ENCODE measurements at regions of chr12 and their contacts with region 1.

Region 1: DNA sequence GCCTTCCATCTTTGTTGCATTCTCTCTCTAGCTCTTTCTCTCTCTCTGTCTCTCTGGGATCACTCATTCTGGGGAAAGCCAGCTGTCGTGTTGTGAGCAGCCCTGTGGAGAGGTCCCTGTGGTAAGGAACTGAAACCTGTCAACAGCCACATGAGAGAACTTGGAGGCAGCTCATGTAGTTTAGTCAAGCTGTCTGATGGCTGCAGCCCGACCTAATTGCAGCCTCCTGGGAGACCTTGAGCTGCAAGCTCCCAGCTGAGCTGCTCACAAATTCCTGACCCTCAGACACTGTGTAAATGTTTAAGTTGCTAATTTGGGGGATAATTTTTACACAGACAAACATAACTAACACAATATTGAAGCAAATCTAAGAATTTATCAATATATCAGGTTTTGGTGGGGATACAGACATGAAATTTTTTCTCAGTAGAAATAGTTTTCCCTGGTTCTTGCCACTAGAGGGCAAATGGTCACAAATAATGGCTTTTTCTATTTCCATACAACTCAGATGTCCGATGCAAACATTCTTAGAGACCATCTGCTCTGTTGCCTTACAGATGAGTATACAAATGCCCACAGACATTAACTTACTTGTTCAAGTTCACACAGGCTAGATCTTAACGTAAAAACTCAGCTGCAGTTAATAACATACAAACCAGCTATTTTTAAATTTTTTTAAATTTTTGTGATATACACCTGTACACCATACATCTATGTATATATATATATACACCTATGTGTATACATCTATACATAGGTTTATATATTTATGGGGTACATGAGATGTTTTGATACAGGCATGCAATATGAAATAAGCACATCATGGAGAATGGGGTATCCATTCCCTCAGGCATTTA is 15.5 kb upstream of the KRR1 start:
- DNase-seq: peak; percentile 39
- ATAC-seq: peak; percentile 66
- H3K4me3 Mint-ChIP-seq: no peak overlapping the region
- H3K27ac Mint-ChIP-seq: no peak overlapping the region
- H3K4me1 Mint-ChIP-seq: peaks cover 8% of the 10 kb centered on the region
- H3K27me3 Mint-ChIP-seq: peaks cover 28% of the 10 kb centered on the region
- CTCF ChIP-seq: peak; percentile 61

Region 2: GRCh38 chr12:75623631-75624118 is 96.8 kb after region 1 on chr12:
- CTCF ChIA-PET with region 1: no interaction called
- POLR2A ChIA-PET with region 1: no interaction called
- intact Hi-C with region 1: no loop called
- DNase-seq: no peak
- ATAC-seq: no peak
- H3K4me3 Mint-ChIP-seq: no peak overlapping the region
- H3K27ac Mint-ChIP-seq: no peak overlapping the region
- H3K4me1 Mint-ChIP-seq: no peaks in the 10 kb centered on the region
- H3K27me3 Mint-ChIP-seq: peaks cover 2% of the 10 kb centered on the region
- CTCF ChIP-seq: no peak

Region 3: GRCh38 chr12:75641031-75641780 is 114.3 kb after region 1 on chr12:
- CTCF ChIA-PET with region 1: interaction called, 4 read pairs
- POLR2A ChIA-PET with region 1: no interaction called
- intact Hi-C with region 1: loop called (anchors 10 kb)
- DNase-seq: peak; percentile 73
- ATAC-seq: peak; percentile 93
- H3K4me3 Mint-ChIP-seq: no peak overlapping the region
- H3K27ac Mint-ChIP-seq: peak overlapping the region; percentile 70
- H3K4me1 Mint-ChIP-seq: peaks cover 23% of the 10 kb centered on the region
- H3K27me3 Mint-ChIP-seq: peaks cover 10% of the 10 kb centered on the region
- CTCF ChIP-seq: no peak

Region 4: DNA sequence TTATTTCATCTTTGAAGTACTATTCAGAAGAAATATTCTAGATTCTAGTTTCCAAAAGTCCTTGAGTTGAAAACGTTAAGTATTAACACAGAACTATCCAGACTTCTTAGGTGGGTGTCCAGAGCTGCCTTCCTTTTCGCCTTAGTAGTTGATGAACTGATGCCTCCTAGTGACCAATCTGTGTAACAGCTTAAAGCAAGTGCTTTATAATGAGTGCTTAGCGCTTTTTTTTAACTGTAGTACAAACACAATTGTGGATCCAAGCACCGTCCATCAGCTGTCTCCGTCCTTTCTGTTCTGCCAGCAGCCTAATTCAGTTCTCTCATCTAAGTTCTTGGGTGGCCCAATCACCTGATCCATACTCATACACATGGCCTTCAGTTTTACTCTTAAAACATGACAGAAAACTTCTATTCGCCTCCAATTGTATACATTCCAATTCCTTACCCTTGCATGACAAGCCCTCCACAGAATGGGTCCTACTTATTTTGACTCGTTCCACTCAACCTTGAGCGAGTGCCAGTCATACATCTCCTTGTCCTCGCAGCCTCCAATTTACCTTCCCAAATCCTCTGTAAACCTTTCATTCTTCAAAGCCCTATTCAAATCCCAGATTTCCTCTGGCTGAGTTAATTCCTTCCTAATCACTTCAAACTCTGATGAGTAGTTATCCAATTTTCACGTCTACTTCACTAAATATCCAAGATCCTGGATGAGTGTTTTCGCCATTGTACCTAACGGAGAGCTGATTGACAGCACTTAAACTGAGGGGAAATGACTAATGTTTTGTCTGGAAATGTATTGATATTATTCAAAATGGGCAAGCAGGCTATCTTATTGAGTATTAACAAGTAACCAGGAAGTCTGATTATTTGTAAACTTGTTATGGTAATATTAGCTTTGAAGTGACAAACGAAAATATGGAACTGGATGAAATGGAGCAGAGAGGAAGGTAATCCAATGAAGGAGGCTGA is 510.5 kb after region 1 on chr12:
- CTCF ChIA-PET with region 1: interaction called, 27 read pairs
- POLR2A ChIA-PET with region 1: interaction called, 3 read pairs
- intact Hi-C with region 1: loop called (anchors 2 kb)
- DNase-seq: peak; percentile 32
- ATAC-seq: peak; percentile 74
- H3K4me3 Mint-ChIP-seq: no peak overlapping the region
- H3K27ac Mint-ChIP-seq: no peak overlapping the region
- H3K4me1 Mint-ChIP-seq: peaks cover 37% of the 10 kb centered on the region
- H3K27me3 Mint-ChIP-seq: no peaks in the 10 kb centered on the region
- CTCF ChIP-seq: peak; percentile 77